B cell (primary cell): ENCODE measurements at regions of chr10 and their contacts with region 1.

Region 1: DNA sequence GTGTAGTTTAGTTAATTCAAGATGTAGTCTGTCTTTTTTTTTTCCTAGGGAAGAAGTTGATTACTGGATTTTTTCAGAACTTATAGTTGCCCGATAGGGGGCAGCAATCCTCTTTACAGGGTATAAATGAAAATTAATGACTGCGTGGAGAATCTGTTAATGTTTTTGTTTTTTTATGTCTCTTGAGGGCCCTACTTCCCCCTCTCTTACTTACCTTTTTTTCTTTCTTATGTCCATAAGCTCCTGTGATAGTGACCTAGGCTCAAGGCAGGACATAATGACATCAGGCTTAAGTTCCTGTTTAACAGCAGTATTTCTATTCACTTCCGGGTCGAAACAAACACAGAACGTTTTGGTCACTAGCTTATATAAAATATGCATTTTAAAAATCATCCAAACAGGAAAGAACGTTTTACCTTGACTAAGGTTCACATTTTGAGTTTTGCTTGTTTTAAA is 18.8 kb downstream of the CDC123 start:
- DNase-seq: peak; percentile 83
- ATAC-seq: peak; percentile 24
- H3K4me3 ChIP-seq: peak overlapping the region in 4 of 5 experiments; percentile 9 to 42 (median 34)
- H3K4me3 Mint-ChIP-seq: peak overlapping the region; percentile 80
- H3K27ac ChIP-seq: peak overlapping the region; percentile 53 to 80
- H3K27ac Mint-ChIP-seq: peak overlapping the region; percentile 92
- H3K4me1 ChIP-seq: peaks cover 10 to 12% of the 10 kb centered on the region in 2 donors
- H3K4me1 Mint-ChIP-seq: peaks cover 14% of the 10 kb centered on the region
- H3K27me3 ChIP-seq: no peaks in the 10 kb centered on the region
- H3K27me3 Mint-ChIP-seq: no peaks in the 10 kb centered on the region
- CTCF ChIP-seq: peak; percentile 90

Region 2: GRCh38 chr10:12201543-12201942 is 13.2 kb before region 1 on chr10:
- CTCF ChIA-PET with region 1: interaction called, 13 read pairs
- POLR2A ChIA-PET with region 1: interaction called, 7 read pairs
- intact Hi-C with region 1: no loop called
- DNase-seq: no peak
- ATAC-seq: no peak
- H3K4me3 ChIP-seq: no peak overlapping the region
- H3K4me3 Mint-ChIP-seq: no peak overlapping the region
- H3K27ac ChIP-seq: no peak overlapping the region
- H3K27ac Mint-ChIP-seq: no peak overlapping the region
- H3K4me1 ChIP-seq: peaks cover 10 to 15% of the 10 kb centered on the region in 2 donors
- H3K4me1 Mint-ChIP-seq: peaks cover 31% of the 10 kb centered on the region
- H3K27me3 ChIP-seq: no peaks in the 10 kb centered on the region
- H3K27me3 Mint-ChIP-seq: no peaks in the 10 kb centered on the region
- CTCF ChIP-seq: no peak

Region 3: GRCh38 chr10:12235796-12236195 is 21.0 kb after region 1 on chr10:
- CTCF ChIA-PET with region 1: interaction called, 25 read pairs
- POLR2A ChIA-PET with region 1: no interaction called
- intact Hi-C with region 1: no loop called
- DNase-seq: no peak
- ATAC-seq: no peak
- H3K4me3 ChIP-seq: no peak overlapping the region
- H3K4me3 Mint-ChIP-seq: no peak overlapping the region
- H3K27ac ChIP-seq: no peak overlapping the region
- H3K27ac Mint-ChIP-seq: no peak overlapping the region
- H3K4me1 ChIP-seq: peaks cover 1 to 3% of the 10 kb centered on the region in 2 donors
- H3K4me1 Mint-ChIP-seq: peaks cover 9% of the 10 kb centered on the region
- H3K27me3 ChIP-seq: no peaks in the 10 kb centered on the region
- H3K27me3 Mint-ChIP-seq: no peaks in the 10 kb centered on the region
- CTCF ChIP-seq: no peak

Region 4: DNA sequence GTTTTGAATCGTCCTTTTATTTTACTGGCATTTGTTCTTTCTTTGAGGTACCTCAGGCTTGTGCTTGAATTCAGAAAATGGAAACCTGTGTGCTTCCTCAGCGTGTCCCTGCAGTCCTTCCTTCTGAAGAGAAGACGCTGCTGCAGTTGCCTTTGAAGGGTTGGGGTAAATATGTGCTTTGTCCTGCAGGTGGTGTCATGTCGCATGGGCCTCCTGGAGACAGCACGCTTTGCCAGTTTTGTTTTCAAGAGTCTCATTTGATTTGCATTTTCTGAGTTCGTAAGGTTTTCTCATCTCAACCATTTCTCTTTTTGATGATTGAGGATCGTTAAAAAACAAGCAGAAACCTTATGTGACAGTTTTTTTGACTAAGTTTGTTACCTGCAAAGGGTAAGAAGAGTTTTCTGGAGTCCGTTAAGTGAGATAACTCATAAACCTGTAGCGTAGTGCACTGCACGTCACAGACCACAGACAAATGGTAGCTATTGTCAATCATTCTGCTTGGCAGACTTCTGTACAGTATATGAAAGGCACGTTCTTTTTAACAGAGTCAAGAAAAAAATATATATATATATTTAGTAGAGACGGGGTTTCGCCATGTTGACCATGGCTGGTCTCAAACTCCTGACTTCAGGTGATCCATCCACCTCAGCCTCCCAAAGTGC is 38.2 kb after region 1 on chr10:
- CTCF ChIA-PET with region 1: interaction called, 11 read pairs
- POLR2A ChIA-PET with region 1: no interaction called
- intact Hi-C with region 1: no loop called
- DNase-seq: peak; percentile 86
- ATAC-seq: peak; percentile 99
- H3K4me3 ChIP-seq: peak overlapping the region in 2 of 5 experiments; percentile 23 to 53
- H3K4me3 Mint-ChIP-seq: peak overlapping the region; percentile 83
- H3K27ac ChIP-seq: peak overlapping the region; percentile 57
- H3K27ac Mint-ChIP-seq: peak overlapping the region; percentile 93
- H3K4me1 ChIP-seq: peaks cover 14% of the 10 kb centered on the region in 2 donors
- H3K4me1 Mint-ChIP-seq: peaks cover 17% of the 10 kb centered on the region
- H3K27me3 ChIP-seq: no peaks in the 10 kb centered on the region
- H3K27me3 Mint-ChIP-seq: no peaks in the 10 kb centered on the region
- CTCF ChIP-seq: peak; percentile 82

Region 5: DNA sequence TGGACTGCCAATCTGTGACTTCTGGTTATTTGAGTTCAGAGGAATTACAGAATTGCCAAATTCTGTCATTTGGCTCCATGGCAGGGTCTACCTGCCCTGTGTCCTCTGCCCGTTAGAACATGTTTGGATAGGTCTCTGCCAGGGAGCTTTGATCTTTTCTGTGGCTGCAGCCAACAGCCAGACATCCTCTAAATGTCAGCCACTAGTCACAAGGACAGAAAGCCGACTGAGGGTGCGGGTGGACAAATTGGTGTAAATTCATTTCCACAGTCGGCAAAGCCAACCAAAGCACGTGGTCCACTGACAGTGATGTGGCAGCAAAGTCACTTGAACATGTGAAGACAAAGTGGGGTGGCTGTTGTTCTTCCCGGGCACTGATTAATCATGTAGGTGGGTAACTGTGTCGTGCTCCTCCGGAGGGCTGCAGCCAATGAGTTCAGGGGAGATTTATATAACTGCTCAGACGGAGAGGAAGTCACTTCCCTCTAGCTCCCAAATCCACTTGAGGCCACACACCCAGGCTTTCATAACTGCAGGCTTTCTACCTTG is 107.9 kb after region 1 on chr10:
- CTCF ChIA-PET with region 1: interaction called, 11 read pairs
- POLR2A ChIA-PET with region 1: no interaction called
- intact Hi-C with region 1: no loop called
- DNase-seq: no peak
- ATAC-seq: no peak
- H3K4me3 ChIP-seq: no peak overlapping the region
- H3K4me3 Mint-ChIP-seq: no peak overlapping the region
- H3K27ac ChIP-seq: no peak overlapping the region
- H3K27ac Mint-ChIP-seq: no peak overlapping the region
- H3K4me1 ChIP-seq: peaks cover 4 to 15% of the 10 kb centered on the region in 2 donors
- H3K4me1 Mint-ChIP-seq: peaks cover 29% of the 10 kb centered on the region
- H3K27me3 ChIP-seq: no peaks in the 10 kb centered on the region
- H3K27me3 Mint-ChIP-seq: no peaks in the 10 kb centered on the region
- CTCF ChIP-seq: no peak

Region 6: DNA sequence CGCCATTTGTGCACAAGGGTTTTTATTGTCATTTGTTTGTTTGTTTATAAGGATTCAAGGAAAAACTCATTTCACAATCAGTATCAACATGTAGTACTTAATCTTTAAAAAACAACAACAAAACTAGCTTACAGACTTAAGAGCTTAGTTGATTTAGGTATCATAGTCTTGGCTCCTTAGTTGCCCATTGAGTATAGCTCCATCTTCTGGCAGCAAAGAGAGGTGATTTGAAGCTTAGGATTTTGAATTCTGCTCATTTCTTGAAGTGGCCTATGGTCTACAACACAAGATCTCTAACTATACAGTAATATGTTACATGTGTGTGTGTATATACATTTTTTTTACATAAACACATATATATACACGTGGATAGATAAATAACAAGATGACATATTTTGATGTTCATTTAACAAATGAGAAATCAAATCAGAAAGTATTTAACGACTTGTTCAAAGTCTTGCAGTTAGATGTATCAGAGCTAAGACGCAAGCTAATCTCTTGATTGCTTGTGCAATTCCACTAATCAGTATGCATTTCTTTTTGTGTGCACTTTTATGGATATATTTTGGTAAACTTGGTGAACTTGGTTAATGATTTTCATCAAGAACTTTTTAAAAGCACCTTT is 441.8 kb after region 1 on chr10:
- CTCF ChIA-PET with region 1: interaction called, 104 read pairs
- POLR2A ChIA-PET with region 1: no interaction called
- intact Hi-C with region 1: loop called (anchors 1 kb)
- DNase-seq: peak; percentile 71
- ATAC-seq: peak; percentile 65
- H3K4me3 ChIP-seq: no peak overlapping the region
- H3K4me3 Mint-ChIP-seq: no peak overlapping the region
- H3K27ac ChIP-seq: no peak overlapping the region
- H3K27ac Mint-ChIP-seq: no peak overlapping the region
- H3K4me1 ChIP-seq: peaks cover 5 to 6% of the 10 kb centered on the region in 2 donors
- H3K4me1 Mint-ChIP-seq: peaks cover 14% of the 10 kb centered on the region
- H3K27me3 ChIP-seq: no peaks in the 10 kb centered on the region
- H3K27me3 Mint-ChIP-seq: no peaks in the 10 kb centered on the region
- CTCF ChIP-seq: peak; percentile 86

Region 7: GRCh38 chr10:12902135-12902572 is 687.4 kb after region 1 on chr10:
- CTCF ChIA-PET with region 1: interaction called, 32 read pairs
- POLR2A ChIA-PET with region 1: no interaction called
- intact Hi-C with region 1: no loop called
- DNase-seq: peak; percentile 72
- ATAC-seq: no peak
- H3K4me3 ChIP-seq: no peak overlapping the region
- H3K4me3 Mint-ChIP-seq: no peak overlapping the region
- H3K27ac ChIP-seq: no peak overlapping the region
- H3K27ac Mint-ChIP-seq: no peak overlapping the region
- H3K4me1 ChIP-seq: no peaks in the 10 kb centered on the region
- H3K4me1 Mint-ChIP-seq: no peaks in the 10 kb centered on the region
- H3K27me3 ChIP-seq: no peaks in the 10 kb centered on the region
- H3K27me3 Mint-ChIP-seq: peaks cover 17% of the 10 kb centered on the region
- CTCF ChIP-seq: peak; percentile 84

Region 8: DNA sequence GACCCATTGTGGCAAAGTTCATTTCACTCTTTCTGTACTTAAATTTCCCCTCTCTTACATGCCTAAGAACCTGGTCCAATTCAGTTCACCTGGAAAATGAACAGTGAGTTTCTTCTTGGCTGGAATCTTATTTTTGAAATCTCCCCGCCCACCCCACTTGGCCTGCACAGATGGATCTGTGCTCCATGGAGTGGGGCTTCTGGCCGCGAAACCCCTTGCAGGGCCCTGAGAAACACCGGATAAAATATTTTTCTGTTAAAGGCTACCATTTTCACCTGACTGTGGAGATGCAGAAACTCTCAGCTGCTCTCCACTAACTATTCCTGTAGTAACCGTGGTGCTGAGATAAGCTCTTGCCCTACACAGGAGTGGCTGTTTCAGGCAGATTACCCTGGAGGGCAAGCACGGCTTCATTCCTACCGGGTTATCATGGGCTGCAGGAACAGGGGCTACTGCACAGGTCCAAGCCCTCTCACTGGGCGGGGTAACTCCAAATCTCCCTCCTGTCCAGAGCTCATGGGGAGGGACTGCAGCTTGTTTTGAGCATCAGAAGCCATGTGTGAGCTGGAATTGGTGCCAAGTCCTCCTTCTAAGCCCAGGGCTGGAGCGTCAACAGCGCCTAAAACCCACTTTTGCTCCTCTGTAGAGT is 1490.9 kb after region 1 on chr10:
- CTCF ChIA-PET with region 1: no interaction called
- POLR2A ChIA-PET with region 1: no interaction called
- intact Hi-C with region 1: no loop called
- DNase-seq: no peak
- ATAC-seq: no peak
- H3K4me3 ChIP-seq: no peak overlapping the region
- H3K4me3 Mint-ChIP-seq: no peak overlapping the region
- H3K27ac ChIP-seq: no peak overlapping the region
- H3K27ac Mint-ChIP-seq: no peak overlapping the region
- H3K4me1 ChIP-seq: peaks cover 12 to 14% of the 10 kb centered on the region in 2 donors
- H3K4me1 Mint-ChIP-seq: peaks cover 18% of the 10 kb centered on the region
- H3K27me3 ChIP-seq: peaks cover 0 to 19% (median 6%) of the 10 kb centered on the region in 4 experiments
- H3K27me3 Mint-ChIP-seq: peaks cover 22% of the 10 kb centered on the region
- CTCF ChIP-seq: no peak